Posterior vena cava (tissue), 2 donors: ENCODE measurements at regions of chr13 and their contacts with region 1.

Region 1: GRCh38 chr13:106362707-106363106 is 172.8 kb downstream of the EFNB2 start:
- DNase-seq: no peak

Region 2: DNA sequence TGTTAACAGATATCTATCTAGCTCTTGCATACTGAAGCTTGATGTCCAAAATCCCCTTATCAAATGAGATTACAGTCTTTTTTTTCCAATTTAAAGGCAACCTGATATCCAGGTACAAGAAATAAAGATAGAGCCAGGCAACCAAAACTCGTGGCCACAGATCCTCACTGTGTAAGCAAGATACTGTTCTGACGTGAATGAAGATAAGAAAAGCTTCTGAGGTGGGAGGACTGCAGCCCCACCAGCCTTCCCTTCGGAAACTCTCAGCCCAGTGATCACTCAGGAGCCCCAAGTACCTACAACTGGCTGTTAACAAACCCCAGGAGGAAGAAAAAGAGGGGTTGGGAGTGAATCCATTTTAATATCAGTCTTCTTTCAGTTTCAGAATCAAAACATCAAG is 18.9 kb before region 1 on chr13:
- intact Hi-C with region 1: loop called in 1 of 2 experiments (anchors 1 kb)
- DNase-seq: no peak